ENCODE measurements at regions of chr5 and their contacts with region 1.

Region 1: DNA sequence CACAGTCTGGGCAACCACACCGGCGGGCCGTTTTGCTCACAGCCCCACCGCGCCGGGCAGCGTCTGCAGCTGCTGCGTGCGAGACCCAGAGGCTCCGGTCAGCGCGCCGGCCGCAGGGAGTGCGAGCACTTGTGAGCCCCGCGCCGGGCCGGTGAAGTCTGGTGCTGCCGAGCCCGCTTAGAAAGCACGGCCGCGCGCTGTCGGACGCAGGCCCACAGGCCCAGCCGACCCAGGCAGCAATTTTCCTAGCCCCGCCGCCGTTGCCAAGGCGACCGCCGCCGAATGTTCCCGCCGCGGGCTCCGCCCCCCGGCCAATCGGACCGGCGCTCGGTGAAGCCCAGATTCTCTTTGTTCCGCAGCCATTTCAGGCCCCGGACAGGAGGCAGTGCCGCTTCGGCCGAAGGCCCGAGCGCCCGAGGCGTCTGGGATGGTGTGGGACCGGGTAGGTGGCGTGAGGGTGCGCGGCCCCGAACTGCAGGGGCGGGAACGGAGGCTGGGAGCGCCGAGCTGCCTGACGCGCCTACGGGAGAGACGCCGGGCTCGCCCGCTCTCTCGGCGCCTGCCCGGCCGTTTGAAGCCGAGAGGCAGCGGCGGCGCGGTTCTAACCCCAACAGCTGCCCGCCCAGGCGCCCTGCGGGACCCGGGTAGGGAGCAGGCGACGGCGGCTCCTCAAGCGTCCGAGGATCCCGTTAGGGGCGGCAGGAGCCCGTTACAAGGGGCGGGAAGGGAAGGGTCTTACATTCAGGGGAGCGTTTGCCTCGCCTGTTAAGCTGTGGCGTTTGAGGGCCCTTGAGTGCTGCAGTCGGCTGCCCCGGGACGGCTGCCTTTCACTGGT is at the start of gene TNPO1:
- DNase-seq: peak; percentile 70 to 93 (median 79)
- ATAC-seq: peak; percentile 71
- H3K4me3 ChIP-seq: peak within 1 kb of the TSS; percentile 87
- H3K4me3 Mint-ChIP-seq: peak within 1 kb of the TSS; percentile 89
- H3K27ac ChIP-seq: peak within 1 kb of the TSS; percentile 79 to 87
- H3K27ac Mint-ChIP-seq: peak within 1 kb of the TSS; percentile 86
- H3K4me1 ChIP-seq: peaks cover 15% of the 10 kb centered on the region
- H3K4me1 Mint-ChIP-seq: peaks cover 30% of the 10 kb centered on the region
- H3K27me3 ChIP-seq: peaks cover 3 to 4% of the 10 kb centered on the region in 2 experiments
- H3K27me3 Mint-ChIP-seq: peaks cover 22% of the 10 kb centered on the region
- CTCF ChIP-seq: no peak
- total RNA-seq, gene TNPO1: 69.6 to 74.7 TPM

Region 2: GRCh38 chr5:72366324-72366976 is 450.1 kb before region 1 on chr5:
- CTCF ChIA-PET with region 1: interaction called, 3 read pairs
- POLR2A ChIA-PET with region 1: no interaction called
- intact Hi-C with region 1: loop called in 1 of 2 experiments (anchors 2 kb)
- DNase-seq: peak in 7 of 14 experiments; percentile 3 to 60 (median 28)
- ATAC-seq: peak; percentile 44
- H3K4me3 ChIP-seq: no peak overlapping the region
- H3K4me3 Mint-ChIP-seq: no peak overlapping the region
- H3K27ac ChIP-seq: no peak overlapping the region
- H3K27ac Mint-ChIP-seq: no peak overlapping the region
- H3K4me1 ChIP-seq: no peaks in the 10 kb centered on the region
- H3K4me1 Mint-ChIP-seq: no peaks in the 10 kb centered on the region
- H3K27me3 ChIP-seq: no peaks in the 10 kb centered on the region
- H3K27me3 Mint-ChIP-seq: no peaks in the 10 kb centered on the region
- CTCF ChIP-seq: peak; percentile 51

Region 3: GRCh38 chr5:72611118-72611730 is 205.3 kb before region 1 on chr5:
- CTCF ChIA-PET with region 1: interaction called, 9 read pairs
- POLR2A ChIA-PET with region 1: interaction called, 12 read pairs
- intact Hi-C with region 1: loop called (anchors 1 to 2 kb)
- DNase-seq: peak; percentile 2 to 64 (median 22)
- ATAC-seq: peak; percentile 64
- H3K4me3 ChIP-seq: no peak overlapping the region
- H3K4me3 Mint-ChIP-seq: no peak overlapping the region
- H3K27ac ChIP-seq: no peak overlapping the region
- H3K27ac Mint-ChIP-seq: no peak overlapping the region
- H3K4me1 ChIP-seq: no peaks in the 10 kb centered on the region
- H3K4me1 Mint-ChIP-seq: no peaks in the 10 kb centered on the region
- H3K27me3 ChIP-seq: no peaks in the 10 kb centered on the region
- H3K27me3 Mint-ChIP-seq: no peaks in the 10 kb centered on the region
- CTCF ChIP-seq: peak; percentile 80

Region 4: DNA sequence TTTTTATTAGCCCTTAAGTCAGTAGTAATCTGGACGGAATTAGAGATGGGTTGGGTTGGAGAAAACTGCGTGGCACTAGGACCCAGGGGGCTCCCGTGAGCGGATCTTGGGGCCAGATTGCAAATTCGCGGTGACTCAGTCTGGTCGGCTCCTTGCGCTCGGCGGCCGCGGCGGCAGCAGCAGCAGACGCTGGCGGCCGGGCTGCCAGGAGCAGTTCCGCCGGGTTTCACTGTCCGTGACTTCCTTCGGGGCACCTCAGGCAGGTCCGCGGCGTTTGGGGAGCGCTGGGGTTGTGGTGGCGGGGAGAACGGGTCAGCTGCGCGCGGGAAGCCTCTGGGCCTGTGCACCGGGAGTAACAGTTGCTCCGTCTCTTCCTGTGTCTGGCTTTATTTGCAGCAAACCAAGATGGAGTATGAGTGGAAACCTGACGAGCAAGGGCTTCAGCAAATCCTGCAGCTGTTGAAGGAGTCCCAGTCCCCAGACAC is 31.5 kb after region 1 on chr5:
- CTCF ChIA-PET with region 1: interaction called, 5 read pairs
- POLR2A ChIA-PET with region 1: interaction called, 26 read pairs
- intact Hi-C with region 1: loop called (anchors 1 to 2 kb)
- DNase-seq: peak; percentile 68 to 91 (median 77)
- ATAC-seq: peak; percentile 79
- H3K4me3 ChIP-seq: peak overlapping the region; percentile 91
- H3K4me3 Mint-ChIP-seq: peak overlapping the region; percentile 100
- H3K27ac ChIP-seq: peak overlapping the region; percentile 57 to 90
- H3K27ac Mint-ChIP-seq: peak overlapping the region; percentile 96
- H3K4me1 ChIP-seq: peaks cover 11% of the 10 kb centered on the region
- H3K4me1 Mint-ChIP-seq: peaks cover 85% of the 10 kb centered on the region
- H3K27me3 ChIP-seq: no peaks in the 10 kb centered on the region
- H3K27me3 Mint-ChIP-seq: no peaks in the 10 kb centered on the region
- CTCF ChIP-seq: no peak

Region 5: DNA sequence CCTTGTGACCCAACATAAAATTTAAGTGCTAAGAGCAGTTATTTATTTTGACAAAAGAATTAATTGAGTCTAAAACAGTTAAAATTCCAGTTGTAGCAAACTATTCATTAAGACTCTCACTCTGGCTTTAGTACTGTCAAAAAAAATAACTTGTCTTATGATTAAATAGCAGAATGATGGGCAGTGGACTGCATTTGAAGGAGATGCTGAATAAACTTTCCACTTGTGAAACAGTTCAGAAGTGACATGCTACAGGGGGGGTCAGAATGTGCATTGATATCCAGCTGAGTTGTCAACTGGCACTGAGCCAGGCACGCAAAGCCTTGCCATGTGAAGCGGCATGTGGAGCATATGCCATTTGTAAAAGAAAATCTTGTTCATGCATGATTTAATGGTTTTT is 215.3 kb after region 1 on chr5:
- CTCF ChIA-PET with region 1: no interaction called
- POLR2A ChIA-PET with region 1: no interaction called
- intact Hi-C with region 1: no loop called
- DNase-seq: no peak
- ATAC-seq: no peak
- H3K4me3 ChIP-seq: no peak overlapping the region
- H3K4me3 Mint-ChIP-seq: no peak overlapping the region
- H3K27ac ChIP-seq: no peak overlapping the region
- H3K27ac Mint-ChIP-seq: no peak overlapping the region
- H3K4me1 ChIP-seq: no peaks in the 10 kb centered on the region
- H3K4me1 Mint-ChIP-seq: no peaks in the 10 kb centered on the region
- H3K27me3 ChIP-seq: no peaks in the 10 kb centered on the region
- H3K27me3 Mint-ChIP-seq: no peaks in the 10 kb centered on the region
- CTCF ChIP-seq: no peak